Activated naive CD4-positive, alpha-beta T cell treated with anti-CD3 and anti-CD28 coated beads for 36 hours (primary cell): ENCODE measurements at regions of chr19 and their contacts with region 1.

Region 1: DNA sequence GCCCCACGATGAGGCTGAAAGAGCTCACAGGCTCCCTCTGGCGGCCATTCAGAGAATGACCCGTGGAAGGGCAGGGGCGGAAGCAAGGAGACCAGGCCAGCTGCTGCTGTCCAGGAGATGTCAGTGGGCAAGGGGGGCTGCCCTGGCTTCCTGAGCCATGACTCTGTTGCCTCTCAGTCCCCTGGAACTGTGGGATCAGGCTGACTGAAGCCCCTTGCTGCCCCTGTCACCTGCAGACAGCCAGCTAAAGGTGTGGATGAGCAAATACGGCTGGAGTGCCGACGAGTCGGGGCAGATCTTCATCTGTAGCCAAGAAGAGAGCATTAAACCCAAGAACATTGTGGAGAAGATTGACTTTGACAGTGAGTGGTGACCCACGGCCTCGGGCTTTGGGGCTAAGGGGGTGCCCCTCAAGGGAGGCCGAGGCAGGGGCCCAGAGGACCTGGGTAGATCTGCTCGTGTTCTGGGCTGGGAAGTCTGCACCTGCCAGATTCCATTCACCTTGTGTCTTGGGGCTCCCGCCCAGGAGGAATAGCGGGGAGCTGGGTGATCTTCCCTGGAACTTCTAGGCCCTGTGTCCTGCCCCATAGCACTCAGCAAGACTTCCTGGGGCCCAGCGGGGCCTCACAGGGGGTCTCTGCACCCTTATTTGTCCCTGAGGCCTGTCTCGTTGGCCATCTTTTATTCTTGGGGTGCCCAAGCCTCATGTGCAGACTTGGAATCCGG is 12.5 kb upstream of the ACTN4 start:
- DNase-seq: peak; percentile 80
- H3K4me3 Mint-ChIP-seq: no peak overlapping the region
- H3K27ac Mint-ChIP-seq: no peak overlapping the region
- H3K4me1 Mint-ChIP-seq: peaks cover 29% of the 10 kb centered on the region
- H3K27me3 Mint-ChIP-seq: no peaks in the 10 kb centered on the region

Region 2: DNA sequence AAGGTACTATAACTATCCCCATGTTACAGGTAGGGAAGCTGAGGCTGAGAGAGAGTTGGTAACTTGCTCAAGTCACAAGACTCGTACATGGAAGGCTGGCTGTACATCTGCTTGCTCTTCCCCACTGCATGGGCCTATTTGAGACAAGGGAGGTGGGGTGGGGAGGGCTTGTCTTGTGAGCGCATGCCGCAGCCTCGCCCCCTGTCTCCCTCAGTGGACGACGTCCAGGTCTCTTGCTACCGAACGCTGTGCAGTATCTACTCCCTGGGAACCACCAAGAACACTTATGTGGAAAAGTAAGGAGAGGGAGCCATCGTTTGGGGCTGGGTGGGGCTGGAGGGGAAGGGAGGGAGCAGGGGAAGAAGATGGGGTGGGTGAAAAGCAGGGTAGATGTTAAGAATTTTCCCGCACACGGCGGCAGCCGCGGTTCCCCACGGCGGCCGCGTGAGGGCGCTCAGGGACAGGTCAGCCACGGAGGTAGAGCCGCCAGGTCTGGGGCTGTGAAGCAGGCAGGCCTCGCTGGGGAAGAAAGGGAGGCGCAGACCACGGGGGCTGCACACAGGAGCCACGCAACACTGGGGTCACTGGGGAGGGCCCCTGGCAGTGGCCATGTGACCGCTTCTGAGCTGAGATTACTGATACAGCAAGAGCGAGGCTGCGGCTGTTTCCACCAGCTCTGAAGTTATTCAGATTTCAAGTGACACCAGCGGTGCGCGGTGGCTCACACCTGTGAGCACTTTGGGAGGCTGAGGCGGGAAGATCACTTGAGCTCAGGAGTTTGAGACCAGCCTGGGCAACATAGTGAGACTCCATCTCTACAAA is 119.9 kb before region 1 on chr19:
- CTCF ChIA-PET with region 1: interaction called, 39 read pairs
- intact Hi-C with region 1: loop called (anchors 1 kb)
- DNase-seq: peak; percentile 82
- H3K4me3 Mint-ChIP-seq: no peak overlapping the region
- H3K27ac Mint-ChIP-seq: no peak overlapping the region
- H3K4me1 Mint-ChIP-seq: peaks cover 7% of the 10 kb centered on the region
- H3K27me3 Mint-ChIP-seq: no peaks in the 10 kb centered on the region

Region 3: GRCh38 chr19:38544034-38544958 is 90.6 kb before region 1 on chr19:
- CTCF ChIA-PET with region 1: interaction called, 12 read pairs
- intact Hi-C with region 1: loop called (anchors 1 kb)
- DNase-seq: peak; percentile 53
- H3K4me3 Mint-ChIP-seq: peak overlapping the region; percentile 52
- H3K27ac Mint-ChIP-seq: no peak overlapping the region
- H3K4me1 Mint-ChIP-seq: peaks cover 16% of the 10 kb centered on the region
- H3K27me3 Mint-ChIP-seq: no peaks in the 10 kb centered on the region

Region 4: GRCh38 chr19:38624822-38625221 is 10.1 kb before region 1 on chr19:
- CTCF ChIA-PET with region 1: interaction called, 42 read pairs
- intact Hi-C with region 1: no loop called
- DNase-seq: no peak
- H3K4me3 Mint-ChIP-seq: no peak overlapping the region
- H3K27ac Mint-ChIP-seq: no peak overlapping the region
- H3K4me1 Mint-ChIP-seq: peaks cover 11% of the 10 kb centered on the region
- H3K27me3 Mint-ChIP-seq: no peaks in the 10 kb centered on the region

Region 5: GRCh38 chr19:38647368-38647965 is 12.5 kb after region 1 on chr19 and contains the start of gene ACTN4:
- CTCF ChIA-PET with region 1: interaction called, 20 read pairs
- intact Hi-C with region 1: loop called (anchors 1 kb)
- DNase-seq: peak; percentile 99
- H3K4me3 Mint-ChIP-seq: peak within 1 kb of the TSS; percentile 96
- H3K27ac Mint-ChIP-seq: peak within 1 kb of the TSS; percentile 30
- H3K4me1 Mint-ChIP-seq: peaks cover 30% of the 10 kb centered on the region
- H3K27me3 Mint-ChIP-seq: peaks cover 29% of the 10 kb centered on the region
- total RNA-seq, gene ACTN4: 117 to 119 TPM

Region 6: DNA sequence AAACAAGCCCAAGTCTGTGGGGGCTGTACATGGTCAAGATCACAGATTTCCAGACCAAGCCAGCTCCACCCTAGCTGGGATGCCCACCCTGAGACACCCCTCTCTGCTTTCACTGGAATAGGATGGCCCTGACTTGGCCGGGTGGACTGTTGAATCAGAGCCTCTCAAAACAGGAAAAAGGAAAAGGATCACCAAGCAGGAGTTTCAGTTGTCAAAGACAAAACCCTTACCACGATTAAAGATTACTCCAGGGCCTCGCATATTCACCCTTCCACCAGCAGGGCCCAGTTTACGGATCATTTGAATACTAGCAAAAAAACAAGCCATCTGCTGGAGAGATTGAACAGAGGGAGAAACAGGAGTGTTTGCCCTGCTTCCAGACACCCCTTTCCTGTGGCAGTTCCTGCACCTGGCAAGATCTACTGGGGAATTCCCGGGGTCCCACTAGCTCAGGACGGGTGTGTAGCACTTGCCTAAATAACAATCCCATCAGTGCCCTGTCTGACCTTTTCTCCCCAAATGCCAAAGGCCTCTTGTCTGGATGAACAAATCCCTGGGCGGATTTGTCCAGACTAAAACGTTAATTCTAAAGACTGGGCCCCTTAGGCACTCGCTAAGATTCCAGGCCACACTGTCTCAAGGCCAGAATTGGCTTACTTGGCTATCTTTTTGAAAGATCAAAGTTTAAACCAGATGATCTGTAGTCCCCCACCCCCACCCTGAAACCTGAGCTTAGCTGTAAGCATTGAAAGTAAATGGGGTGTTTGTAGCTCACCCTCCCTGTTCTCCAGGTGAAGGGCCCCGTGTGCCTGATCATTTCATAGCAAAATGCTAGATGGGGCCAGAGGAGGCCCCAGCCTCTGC is 51.0 kb after region 1 on chr19:
- CTCF ChIA-PET with region 1: interaction called, 4 read pairs
- intact Hi-C with region 1: loop called (anchors 1 kb)
- DNase-seq: peak; percentile 23
- H3K4me3 Mint-ChIP-seq: no peak overlapping the region
- H3K27ac Mint-ChIP-seq: peak overlapping the region; percentile 31
- H3K4me1 Mint-ChIP-seq: peaks cover 45% of the 10 kb centered on the region
- H3K27me3 Mint-ChIP-seq: no peaks in the 10 kb centered on the region

Region 7: DNA sequence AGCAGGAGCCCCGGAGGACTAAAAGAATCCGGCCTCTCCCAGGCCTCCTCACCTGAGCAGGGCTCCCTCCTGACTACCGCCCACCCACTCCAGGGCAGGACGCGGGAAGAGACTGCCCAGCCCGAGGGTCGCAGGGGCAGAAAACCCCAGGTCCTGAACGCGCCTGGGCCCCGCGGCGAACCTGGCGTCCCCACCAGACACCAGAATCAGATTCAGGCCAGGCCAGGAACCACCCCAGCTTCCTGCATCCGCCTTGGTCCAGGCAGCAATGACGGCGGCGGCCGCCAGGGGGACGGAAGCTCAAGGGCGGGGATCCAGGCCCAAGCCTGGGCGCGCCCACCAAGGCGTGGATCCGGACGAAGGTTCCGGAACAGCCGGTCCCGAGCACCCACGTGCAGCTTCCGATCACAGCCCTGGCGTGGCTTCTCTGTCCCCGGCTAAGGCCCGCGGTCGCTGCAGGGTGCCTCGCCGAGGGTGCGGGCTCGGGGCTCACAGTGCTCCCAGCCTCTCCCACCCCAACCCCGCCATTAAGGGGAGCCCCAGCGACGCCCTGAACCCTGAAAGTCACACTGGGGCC is 134.8 kb after region 1 on chr19:
- CTCF ChIA-PET with region 1: no interaction called
- intact Hi-C with region 1: no loop called
- DNase-seq: peak; percentile 91
- H3K4me3 Mint-ChIP-seq: peak overlapping the region; percentile 47
- H3K27ac Mint-ChIP-seq: no peak overlapping the region
- H3K4me1 Mint-ChIP-seq: peaks cover 6% of the 10 kb centered on the region
- H3K27me3 Mint-ChIP-seq: no peaks in the 10 kb centered on the region

Region 8: DNA sequence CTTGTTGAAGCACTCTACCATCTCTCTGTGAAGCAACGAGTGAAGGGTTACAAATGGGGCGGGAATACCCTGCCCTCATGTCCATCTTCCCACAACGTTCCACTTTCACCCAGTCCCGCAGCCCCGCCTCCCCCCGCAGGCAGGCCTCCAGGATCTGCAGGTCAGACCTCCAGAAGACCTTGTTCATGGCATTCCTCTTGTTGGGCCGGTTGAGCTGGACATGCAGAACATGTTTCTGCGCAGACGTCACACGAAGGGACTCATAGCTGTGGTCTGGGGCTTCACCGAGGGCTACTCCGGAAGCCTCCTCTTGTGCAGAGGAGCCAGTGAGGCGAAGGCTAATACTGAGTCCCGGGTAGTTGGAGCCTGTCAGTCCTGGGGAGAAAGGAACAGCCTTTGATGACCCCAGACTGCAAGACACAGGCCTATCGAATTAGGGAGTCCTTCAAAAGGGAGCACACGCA is 196.3 kb after region 1 on chr19:
- CTCF ChIA-PET with region 1: interaction called, 5 read pairs
- intact Hi-C with region 1: loop called (anchors 5 kb)
- DNase-seq: peak; percentile 64
- H3K4me3 Mint-ChIP-seq: peak overlapping the region; percentile 79
- H3K27ac Mint-ChIP-seq: peak overlapping the region; percentile 94
- H3K4me1 Mint-ChIP-seq: peaks cover 34% of the 10 kb centered on the region
- H3K27me3 Mint-ChIP-seq: no peaks in the 10 kb centered on the region

Region 9: GRCh38 chr19:39430675-39431593 is 796.0 kb after region 1 on chr19:
- CTCF ChIA-PET with region 1: no interaction called
- intact Hi-C with region 1: no loop called
- DNase-seq: peak; percentile 78
- H3K4me3 Mint-ChIP-seq: peak overlapping the region; percentile 18
- H3K27ac Mint-ChIP-seq: peak overlapping the region; percentile 93
- H3K4me1 Mint-ChIP-seq: peaks cover 43% of the 10 kb centered on the region
- H3K27me3 Mint-ChIP-seq: no peaks in the 10 kb centered on the region